ENCODE measurements at regions of chr7 and their contacts with region 1.

Region 1: DNA sequence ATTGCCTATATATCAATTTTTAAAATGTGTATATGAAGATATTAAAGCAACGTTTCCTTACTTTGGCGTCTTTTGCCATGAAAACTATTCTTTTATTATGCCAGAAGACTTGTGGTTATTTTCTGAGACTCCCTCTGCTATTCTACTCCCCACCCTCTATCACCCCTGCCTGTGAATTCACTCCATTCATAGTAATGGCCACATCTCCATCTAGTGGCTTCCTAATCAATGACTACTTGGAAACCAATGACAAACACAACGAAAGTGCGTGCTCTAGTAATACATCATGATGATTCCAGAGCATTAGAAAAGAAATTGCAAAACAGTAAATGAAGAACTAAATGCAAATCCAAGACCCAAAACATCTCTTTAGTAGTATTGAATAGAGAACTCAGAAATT is 186.7 kb upstream of the HGF start:
- DNase-seq: no peak
- H3K4me3 Mint-ChIP-seq: no peak overlapping the region
- H3K27ac Mint-ChIP-seq: no peak overlapping the region
- H3K4me1 Mint-ChIP-seq: no peaks in the 10 kb centered on the region
- H3K27me3 Mint-ChIP-seq: no peaks in the 10 kb centered on the region

Region 2: DNA sequence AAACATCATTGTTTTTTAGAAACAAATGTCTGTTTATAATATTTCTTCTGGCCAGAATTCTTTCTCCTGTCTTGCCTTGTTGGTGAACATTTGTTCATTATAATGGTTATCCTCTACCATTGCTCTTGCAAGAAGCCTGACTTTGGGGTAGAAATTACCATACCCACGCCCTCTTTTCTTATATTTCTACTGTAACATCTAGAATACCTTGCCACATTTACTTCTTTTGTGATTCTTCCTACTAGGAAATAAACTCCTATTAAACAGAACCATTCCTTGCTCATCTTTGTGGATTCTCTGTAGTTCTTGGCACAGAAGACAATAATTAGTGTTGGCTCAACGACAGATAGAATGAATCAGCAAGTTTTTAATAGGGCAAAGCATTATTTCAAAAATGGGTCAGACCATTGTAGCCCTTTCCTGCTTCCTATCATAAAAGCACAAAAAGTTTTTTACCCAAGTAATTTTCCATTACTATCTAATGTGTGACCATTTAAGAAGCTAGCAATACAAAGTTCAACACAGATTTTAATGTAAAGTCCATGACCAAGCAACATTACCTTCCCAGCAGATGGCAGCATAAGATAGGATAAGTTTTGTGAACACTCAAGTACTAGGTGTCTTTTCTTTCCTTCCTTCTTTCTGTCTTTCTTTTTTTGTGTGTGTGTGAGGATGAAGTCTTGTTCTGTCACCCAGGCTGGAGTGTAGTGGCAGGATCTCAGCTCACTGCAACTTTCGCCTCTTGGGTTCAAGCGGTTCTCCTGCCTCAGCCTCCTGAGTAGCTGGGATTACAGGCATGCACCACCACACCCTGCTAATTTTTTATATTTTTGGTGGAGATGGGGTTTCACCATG is 457.0 kb before region 1 on chr7:
- intact Hi-C with region 1: loop called (anchors 10 kb)
- DNase-seq: no peak
- H3K4me3 Mint-ChIP-seq: no peak overlapping the region
- H3K27ac Mint-ChIP-seq: no peak overlapping the region
- H3K4me1 Mint-ChIP-seq: no peaks in the 10 kb centered on the region
- H3K27me3 Mint-ChIP-seq: no peaks in the 10 kb centered on the region

Measured in activated CD4-positive, alpha-beta T cell treated with anti-CD3 and anti-CD28 coated beads, Interleukin-2, amount 10 ng/mL, durations not matched to agents 24 days and 14 days (primary cell).